GM10248 (cell line): ENCODE measurements at regions of chr7 and their contacts with region 1.

Region 1: DNA sequence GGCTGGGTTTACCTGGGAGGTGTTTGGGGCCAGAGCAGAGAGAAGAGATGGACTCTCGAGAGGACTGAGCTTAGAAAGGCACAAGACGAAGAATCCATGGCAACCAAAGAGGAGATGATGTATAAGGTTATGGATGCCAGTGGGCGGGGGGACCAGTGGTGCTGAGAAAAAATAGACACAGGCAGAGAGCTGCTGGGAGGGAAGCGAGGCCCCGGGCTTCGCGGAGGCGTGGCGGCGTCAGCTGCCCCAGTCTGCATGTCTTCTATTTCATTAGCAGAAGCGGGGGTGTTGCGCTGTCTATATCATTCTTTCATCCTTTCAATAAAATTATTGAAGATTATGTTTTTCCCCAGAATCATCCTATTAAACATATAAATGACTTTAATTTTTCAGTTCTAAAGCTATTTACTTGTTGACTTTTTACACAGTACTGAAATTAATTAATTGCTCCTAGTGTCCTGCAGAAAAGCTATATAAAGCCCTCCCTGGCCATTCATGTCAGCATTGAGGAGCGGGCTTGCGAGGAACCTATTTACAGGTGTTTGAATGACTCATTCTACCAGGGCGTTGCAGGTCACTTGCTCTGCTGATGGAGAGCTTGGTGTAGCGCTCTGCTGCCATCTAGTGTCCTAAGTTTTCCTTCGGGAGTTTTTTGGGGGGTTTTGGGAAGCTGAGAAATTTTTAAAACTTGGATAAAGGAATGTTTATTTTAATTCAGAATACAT is 42.9 kb upstream of the BHLHA15 start:
- DNase-seq: peak; percentile 87
- CTCF ChIP-seq: peak; percentile 61

Region 2: GRCh38 chr7:98021588-98022351 is 146.6 kb before region 1 on chr7:
- CTCF ChIA-PET with region 1: interaction called, 385 read pairs
- POLR2A ChIA-PET with region 1: no interaction called
- DNase-seq: peak; percentile 86
- CTCF ChIP-seq: peak; percentile 96

Region 3: GRCh38 chr7:98133621-98134266 is 34.6 kb before region 1 on chr7:
- CTCF ChIA-PET with region 1: interaction called, 23 read pairs
- POLR2A ChIA-PET with region 1: interaction called, 3 read pairs
- DNase-seq: no peak
- CTCF ChIP-seq: no peak

Region 4: DNA sequence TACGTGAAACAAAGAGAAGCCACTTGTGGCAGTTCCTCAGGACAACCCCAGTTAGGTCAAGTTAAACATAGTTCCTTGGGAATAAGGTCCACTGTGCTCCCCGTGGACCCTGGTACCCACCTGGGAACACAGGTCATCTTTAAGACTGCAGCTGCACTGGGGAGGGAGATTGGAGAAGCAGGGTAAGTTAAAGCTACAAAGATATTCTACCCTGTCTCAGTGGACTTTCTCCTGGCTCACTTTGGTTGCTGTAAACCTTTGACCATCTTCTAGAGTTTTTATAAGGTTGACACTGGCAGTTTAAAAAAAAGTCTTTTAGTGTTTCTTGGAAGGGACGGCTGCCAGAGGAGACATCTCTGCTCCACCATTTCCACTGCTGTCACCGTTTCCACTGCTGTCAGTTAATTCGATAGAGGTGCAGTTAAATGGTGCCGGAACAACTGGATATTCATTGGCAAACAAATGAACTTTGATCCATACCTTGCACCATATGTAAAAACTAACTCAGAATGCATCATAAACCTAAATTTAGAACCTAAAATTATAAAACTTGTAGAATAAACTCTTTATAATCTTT is 19.1 kb before region 1 on chr7:
- CTCF ChIA-PET with region 1: interaction called, 15 read pairs
- POLR2A ChIA-PET with region 1: no interaction called
- DNase-seq: no peak
- CTCF ChIP-seq: no peak

Region 5: DNA sequence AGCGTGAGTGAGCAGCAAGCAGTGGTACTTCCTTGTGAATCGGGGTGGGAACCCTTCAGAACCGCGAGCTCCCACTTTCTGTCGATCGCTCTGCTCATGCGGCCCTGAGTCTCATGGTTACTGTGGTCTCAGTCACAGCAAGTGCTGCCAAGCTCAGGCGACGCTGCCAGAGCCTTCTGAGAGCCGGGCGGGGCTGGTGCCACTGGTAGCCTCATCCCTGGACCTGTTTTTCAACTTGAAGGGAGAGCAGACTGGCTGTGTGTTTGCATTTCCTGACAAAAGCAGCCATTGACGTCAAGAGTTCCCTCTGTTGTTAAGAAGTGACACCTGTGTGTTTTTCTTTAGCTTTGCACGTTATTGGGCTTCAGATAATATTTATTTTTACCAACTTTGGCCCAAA is 10.0 kb after region 1 on chr7:
- CTCF ChIA-PET with region 1: interaction called, 77 read pairs
- POLR2A ChIA-PET with region 1: no interaction called
- DNase-seq: no peak
- CTCF ChIP-seq: no peak

Region 6: GRCh38 chr7:98559958-98560357 is 391.6 kb after region 1 on chr7:
- CTCF ChIA-PET with region 1: no interaction called
- POLR2A ChIA-PET with region 1: no interaction called
- DNase-seq: no peak
- CTCF ChIP-seq: no peak